Lower lobe of right lung (tissue), 2 donors: ENCODE measurements at regions of chr17 and their contacts with region 1.

Region 1: DNA sequence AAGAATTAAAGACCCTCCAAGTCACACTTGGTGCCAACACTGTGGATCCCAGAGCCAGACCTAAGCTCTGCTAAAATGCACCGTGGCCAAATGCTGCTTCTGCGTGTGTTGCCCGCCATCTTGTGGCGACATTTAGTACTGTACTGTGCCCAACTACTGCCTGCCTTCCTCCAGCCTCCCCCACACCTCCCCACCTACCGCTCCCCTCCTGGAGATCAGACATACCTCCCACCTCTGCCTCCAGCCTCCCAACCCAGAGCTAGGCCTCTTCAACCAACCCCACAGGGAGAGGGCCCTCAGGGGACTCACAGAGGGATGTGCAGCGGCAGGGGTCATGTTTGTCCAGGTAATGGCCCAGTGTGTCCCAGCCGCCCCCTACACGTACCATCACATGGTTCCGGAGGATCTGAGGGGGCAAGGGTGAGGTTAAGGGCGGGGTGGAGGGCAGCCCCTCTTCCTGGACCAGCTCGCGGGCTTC is 5.5 kb downstream of the GAS2L2 start:
- DNase-seq: peak; percentile 72
- ATAC-seq: peak; percentile 83 to 88
- H3K4me3 ChIP-seq: no peak overlapping the region
- H3K27ac ChIP-seq: no peak overlapping the region
- H3K4me1 ChIP-seq: peaks cover 6% of the 10 kb centered on the region
- H3K27me3 ChIP-seq: peaks cover 42% of the 10 kb centered on the region
- CTCF ChIP-seq: peak; percentile 88

Region 2: GRCh38 chr17:35612924-35613521 is 134.6 kb before region 1 on chr17:
- intact Hi-C with region 1: loop called (anchors 10 kb)
- DNase-seq: no peak
- ATAC-seq: no peak
- H3K4me3 ChIP-seq: no peak overlapping the region
- H3K27ac ChIP-seq: no peak overlapping the region
- H3K4me1 ChIP-seq: peaks cover 7% of the 10 kb centered on the region
- H3K27me3 ChIP-seq: no peaks in the 10 kb centered on the region
- CTCF ChIP-seq: peak; percentile 52